Sigmoid colon (tissue), 7 donors: ENCODE measurements at regions of chr20 and their contacts with region 1.

Region 1: GRCh38 chr20:9978397-9979004 is 56.3 kb upstream of the ANKEF1 start:
- DNase-seq: no peak
- H3K4me3 ChIP-seq: no peak overlapping the region
- H3K27ac ChIP-seq: no peak overlapping the region
- H3K4me1 ChIP-seq: peaks cover 0 to 3% (median 0%) of the 10 kb centered on the region in 4 donors
- H3K27me3 ChIP-seq: no peaks in the 10 kb centered on the region
- CTCF ChIP-seq: peak; percentile 42 to 67 (median 56)
- EP300 ChIP-seq: no peak
- POLR2A ChIP-seq: no peak

Region 2: GRCh38 chr20:10089871-10090587 is 111.5 kb after region 1 on chr20:
- intact Hi-C with region 1: loop called (anchors 2 kb)
- DNase-seq: no peak
- H3K4me3 ChIP-seq: no peak overlapping the region
- H3K27ac ChIP-seq: no peak overlapping the region
- H3K4me1 ChIP-seq: no peaks in the 10 kb centered on the region
- H3K27me3 ChIP-seq: no peaks in the 10 kb centered on the region
- CTCF ChIP-seq: no peak
- EP300 ChIP-seq: no peak
- POLR2A ChIP-seq: no peak

Region 3: GRCh38 chr20:10427060-10427692 is 448.7 kb after region 1 on chr20:
- intact Hi-C with region 1: loop called (anchors 5 kb)
- DNase-seq: no peak
- H3K4me3 ChIP-seq: no peak overlapping the region
- H3K27ac ChIP-seq: no peak overlapping the region
- H3K4me1 ChIP-seq: peaks cover 0 to 38% (median 7%) of the 10 kb centered on the region in 4 donors
- H3K27me3 ChIP-seq: no peaks in the 10 kb centered on the region
- CTCF ChIP-seq: peak in 3 of 4 experiments; percentile 44 to 68 (median 59)
- EP300 ChIP-seq: no peak
- POLR2A ChIP-seq: no peak